Activated T-helper 1 cell treated with anti-CD3 and anti-CD28 coated beads, Interleukin-12 subunit alpha, Interleukin-12 subunit beta, Interleukin-2, Interleukin-4 antibody, amounts not matched to agents 30 ng/mL and 10 ng/mL and 1 ng/mL, durations not matched to agents 14 hours and 24 hours and 36 hours (primary cell): ENCODE measurements at regions of chr1 and their contacts with region 1.

Region 1: DNA sequence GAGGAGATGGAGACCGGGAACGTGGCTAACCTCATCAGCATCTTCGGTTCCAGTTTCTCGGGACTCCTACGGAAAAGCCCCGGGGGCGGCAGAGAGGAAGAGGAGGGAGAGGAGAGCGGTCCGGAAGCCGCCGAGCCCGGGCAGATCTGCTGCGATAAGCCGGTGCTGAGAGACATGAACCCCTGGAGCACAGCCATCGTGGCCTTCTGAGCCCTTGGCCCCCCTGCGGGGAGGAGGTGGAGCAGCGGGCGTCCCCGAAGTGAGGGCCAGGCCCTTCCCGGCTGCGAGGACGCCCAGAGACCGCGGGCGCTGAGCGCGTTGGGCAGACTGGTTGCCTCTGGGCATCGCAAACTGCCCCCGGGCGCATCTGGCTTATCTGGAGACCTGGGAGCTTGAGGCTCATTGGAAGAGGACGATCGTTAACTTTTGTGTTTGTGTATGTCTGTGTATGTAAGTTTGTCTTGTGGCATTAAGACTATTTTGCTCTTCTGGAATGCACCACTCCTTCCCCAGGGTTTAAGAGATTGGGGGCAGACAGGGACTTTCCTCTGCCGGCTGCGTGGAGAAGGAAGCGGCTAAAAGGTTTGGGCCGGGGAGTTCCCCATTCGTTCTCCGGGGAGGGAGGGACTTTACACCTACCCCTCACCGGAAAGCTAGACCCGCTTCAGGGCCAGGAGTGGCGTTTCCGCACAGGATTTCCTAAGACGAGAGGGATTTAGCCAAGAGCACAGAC is 1.3 kb downstream of the IER5 start:
- DNase-seq: peak; percentile 78
- H3K4me3 Mint-ChIP-seq: peak overlapping the region; percentile 98
- H3K27ac Mint-ChIP-seq: peak overlapping the region; percentile 95
- H3K4me1 Mint-ChIP-seq: peaks cover 57% of the 10 kb centered on the region
- H3K27me3 Mint-ChIP-seq: peaks cover 5% of the 10 kb centered on the region

Region 2: DNA sequence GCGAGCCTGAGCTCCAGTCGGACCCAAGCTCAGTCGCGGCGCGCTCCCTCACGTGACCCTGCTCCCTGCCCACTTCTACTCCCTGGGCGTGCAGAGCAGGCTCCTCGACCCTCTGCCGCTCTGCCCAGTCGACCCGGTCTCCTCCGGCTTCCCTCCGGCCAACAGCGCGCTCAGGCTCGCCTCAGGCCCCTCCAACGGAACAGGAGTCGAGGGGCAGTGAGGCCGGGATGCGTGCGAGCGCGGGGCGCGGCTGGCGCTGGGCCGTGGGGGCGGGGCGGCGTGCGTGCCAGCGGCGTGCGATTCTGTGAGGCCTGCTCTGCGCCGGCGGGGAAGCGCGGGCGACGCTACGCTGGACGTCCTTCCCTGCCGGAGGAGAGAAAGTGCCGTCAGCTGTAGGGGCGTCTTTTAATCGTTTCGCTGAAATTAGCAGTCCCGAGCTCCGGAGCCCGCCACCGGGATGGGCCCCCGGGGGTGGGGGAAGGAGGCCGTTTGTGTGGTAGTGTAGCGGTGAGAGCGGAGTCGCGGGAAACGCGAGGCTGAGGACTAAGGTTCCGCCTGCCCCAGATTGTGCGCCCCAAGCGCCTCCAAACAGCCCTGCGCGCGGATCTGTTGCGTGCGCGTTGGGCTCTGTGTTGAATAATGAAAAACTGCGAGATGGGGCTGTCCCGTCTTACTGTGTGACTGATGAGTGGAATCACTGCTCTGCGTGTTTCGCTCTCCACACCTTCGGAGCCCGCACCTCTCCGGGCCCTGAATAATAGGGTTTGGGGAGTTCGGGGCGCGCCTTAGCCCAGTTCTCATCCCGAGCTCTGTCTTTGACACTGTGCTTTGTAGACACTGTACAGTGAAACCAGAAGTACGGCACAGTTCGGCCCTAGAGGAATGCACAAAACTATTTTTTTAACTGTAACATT is 587.2 kb before region 1 on chr1 and contains the start of gene ACBD6:
- intact Hi-C with region 1: loop called (anchors 5 kb)
- DNase-seq: peak; percentile 81
- H3K4me3 Mint-ChIP-seq: peak within 1 kb of the TSS; percentile 97
- H3K27ac Mint-ChIP-seq: peak within 1 kb of the TSS; percentile 97
- H3K4me1 Mint-ChIP-seq: peaks cover 25% of the 10 kb centered on the region
- H3K27me3 Mint-ChIP-seq: peaks cover 3% of the 10 kb centered on the region
- total RNA-seq, gene ACBD6: 49.4 and 50.9 TPM in 2 replicates

Region 3: GRCh38 chr1:181014477-181015250 is 75.2 kb before region 1 on chr1:
- intact Hi-C with region 1: loop called (anchors 1 kb)
- DNase-seq: no peak
- H3K4me3 Mint-ChIP-seq: no peak overlapping the region
- H3K27ac Mint-ChIP-seq: no peak overlapping the region
- H3K4me1 Mint-ChIP-seq: peaks cover 44% of the 10 kb centered on the region
- H3K27me3 Mint-ChIP-seq: no peaks in the 10 kb centered on the region

Region 4: DNA sequence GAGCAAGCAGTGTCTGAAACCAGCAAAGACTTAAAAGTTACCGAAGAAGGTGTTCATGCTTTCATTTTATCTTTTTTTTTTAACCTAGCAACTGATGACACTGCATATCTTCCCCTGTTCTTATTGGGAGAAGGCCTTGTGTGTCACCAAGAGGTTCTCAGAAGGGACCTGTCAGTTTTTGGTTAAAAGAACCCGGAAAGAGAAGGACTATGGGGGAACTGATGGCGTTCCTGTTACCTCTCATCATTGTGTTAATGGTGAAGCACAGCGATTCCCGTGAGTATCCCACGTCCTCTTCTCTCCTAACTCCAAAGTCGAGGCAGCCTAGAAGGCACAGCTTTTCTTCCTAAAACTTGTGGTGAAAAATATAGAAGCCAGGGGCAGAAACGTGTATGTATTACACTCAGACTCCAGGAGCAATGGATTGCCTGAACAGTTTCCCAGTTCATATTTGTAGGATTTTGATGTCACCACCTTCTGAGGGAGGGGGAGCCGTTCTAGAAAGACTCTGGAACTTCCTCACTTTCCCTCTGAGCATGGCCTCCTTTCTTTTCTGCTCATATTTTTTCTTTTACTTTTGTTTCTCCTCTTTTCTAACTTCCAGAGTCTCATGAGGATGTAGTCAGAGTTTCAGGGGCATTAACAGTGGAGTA is 55.9 kb before region 1 on chr1 and contains the start of gene MR1:
- intact Hi-C with region 1: loop called (anchors 1 kb)
- DNase-seq: peak; percentile 51
- H3K4me3 Mint-ChIP-seq: peak within 1 kb of the TSS; percentile 95
- H3K27ac Mint-ChIP-seq: peak within 1 kb of the TSS; percentile 96
- H3K4me1 Mint-ChIP-seq: peaks cover 63% of the 10 kb centered on the region
- H3K27me3 Mint-ChIP-seq: no peaks in the 10 kb centered on the region
- total RNA-seq, gene MR1: 16.6 and 17.6 TPM in 2 replicates

Region 5: GRCh38 chr1:181073638-181074037 is 16.2 kb before region 1 on chr1:
- intact Hi-C with region 1: no loop called
- DNase-seq: no peak
- H3K4me3 Mint-ChIP-seq: no peak overlapping the region
- H3K27ac Mint-ChIP-seq: no peak overlapping the region
- H3K4me1 Mint-ChIP-seq: no peaks in the 10 kb centered on the region
- H3K27me3 Mint-ChIP-seq: peaks cover 39% of the 10 kb centered on the region

Region 6: GRCh38 chr1:181105134-181106021 is 15.5 kb after region 1 on chr1:
- intact Hi-C with region 1: loop called (anchors 1 kb)
- DNase-seq: peak; percentile 87
- H3K4me3 Mint-ChIP-seq: peak overlapping the region; percentile 82
- H3K27ac Mint-ChIP-seq: peak overlapping the region; percentile 88
- H3K4me1 Mint-ChIP-seq: peaks cover 72% of the 10 kb centered on the region
- H3K27me3 Mint-ChIP-seq: peaks cover 34% of the 10 kb centered on the region

Region 7: DNA sequence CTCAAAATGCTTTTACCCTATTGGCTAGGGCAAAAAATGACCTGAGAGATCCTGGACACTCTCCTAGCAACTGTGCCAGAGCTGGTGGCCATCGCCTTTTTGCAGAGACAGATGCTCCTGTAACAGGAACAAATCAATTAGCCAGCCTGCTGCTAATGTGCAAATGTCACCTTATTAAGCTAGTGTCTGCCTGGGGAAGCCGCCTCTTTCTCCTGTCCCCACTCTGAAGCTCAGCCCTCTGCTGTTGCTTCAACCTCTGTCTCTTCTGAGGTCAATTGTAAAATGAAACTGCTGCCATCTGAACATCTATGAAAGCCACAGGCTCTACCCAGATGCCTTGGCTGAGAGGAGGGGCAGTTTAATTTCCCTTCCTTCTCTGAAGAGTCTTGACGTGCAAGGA is 308.0 kb after region 1 on chr1:
- intact Hi-C with region 1: loop called (anchors 10 kb)
- DNase-seq: peak; percentile 12
- H3K4me3 Mint-ChIP-seq: peak overlapping the region; percentile 58
- H3K27ac Mint-ChIP-seq: peak overlapping the region; percentile 42
- H3K4me1 Mint-ChIP-seq: peaks cover 33% of the 10 kb centered on the region
- H3K27me3 Mint-ChIP-seq: no peaks in the 10 kb centered on the region